Heart left ventricle (tissue), 16 donors: ENCODE measurements at regions of chr15 and their contacts with region 1.

Region 1: GRCh38 chr15:92877000-92877399 is 23.1 kb upstream of the CHD2 start:
- DNase-seq: no peak
- ATAC-seq: no peak
- H3K4me3 ChIP-seq: no peak overlapping the region
- H3K27ac ChIP-seq: peak overlapping the region in 4 of 12 donors; percentile 14 to 61 (median 40)
- H3K4me1 ChIP-seq: peaks cover 0 to 30% (median 15%) of the 10 kb centered on the region in 12 donors
- H3K27me3 ChIP-seq: no peaks in the 10 kb centered on the region
- CTCF ChIP-seq: no peak
- POLR2A ChIP-seq: no peak

Region 2: DNA sequence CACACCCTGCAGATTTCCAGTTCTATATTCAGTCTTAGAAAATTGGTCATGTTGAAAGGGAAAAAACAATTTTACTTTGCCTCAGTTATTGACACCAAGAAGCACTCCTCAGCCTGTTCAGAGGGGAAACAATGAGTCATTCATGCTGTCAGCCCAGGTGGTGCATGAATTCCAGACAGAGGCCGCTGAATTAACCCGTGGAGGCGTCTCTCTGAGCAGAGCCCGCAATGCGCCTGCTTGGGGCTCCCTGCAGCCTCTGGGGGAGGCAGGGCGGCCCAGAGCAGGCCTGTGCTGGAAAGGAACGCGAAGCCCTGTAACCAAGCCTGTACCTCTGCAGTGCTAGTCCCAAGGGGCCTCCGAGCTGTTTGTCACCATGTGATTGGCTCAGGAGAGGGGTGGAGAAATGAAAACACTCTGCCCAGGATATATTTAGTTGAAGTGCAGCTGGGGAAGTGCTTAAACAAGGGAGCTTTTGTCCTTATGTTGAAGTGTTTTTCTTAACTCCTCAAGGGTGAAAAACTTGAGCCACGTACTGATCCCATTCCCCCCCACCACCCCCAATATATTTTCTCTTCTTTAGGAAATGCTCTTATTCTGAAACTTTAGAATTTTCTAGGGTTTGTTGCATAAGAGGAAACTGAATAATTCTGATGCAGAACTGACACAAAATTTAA is 45.2 kb before region 1 on chr15:
- intact Hi-C with region 1: loop called (anchors 1 to 5 kb)
- DNase-seq: peak; percentile 94 to 99 (median 96)
- ATAC-seq: peak; percentile 98 to 99 (median 98)
- H3K4me3 ChIP-seq: peak overlapping the region in 11 of 12 donors; percentile 12 to 49 (median 37)
- H3K27ac ChIP-seq: peak overlapping the region; percentile 89 to 98 (median 95)
- H3K4me1 ChIP-seq: peaks cover 12 to 53% (median 33%) of the 10 kb centered on the region in 12 donors
- H3K27me3 ChIP-seq: no peaks in the 10 kb centered on the region
- CTCF ChIP-seq: no peak
- POLR2A ChIP-seq: peak; percentile 56 to 95